ENCODE measurements at regions of chr6 and their contacts with region 1.

Region 1: GRCh38 chr6:33276864-33277662 is at the start of gene B3GALT4:
- DNase-seq: peak; percentile 81 to 89 (median 81)
- ATAC-seq: peak; percentile 56 to 78 (median 76)
- H3K4me3 ChIP-seq: peak within 1 kb of the TSS; percentile 47 to 87 (median 72)
- H3K27ac ChIP-seq: peak within 1 kb of the TSS; percentile 73 to 98 (median 92)
- H3K4me1 ChIP-seq: peaks cover 11 to 73% (median 50%) of the 10 kb centered on the region in 12 donors
- H3K27me3 ChIP-seq: no peaks in the 10 kb centered on the region
- CTCF ChIP-seq: peak; percentile 32 to 79 (median 59)
- POLR2A ChIP-seq: peak in 1 of 2 donors; percentile 66
- total RNA-seq, gene B3GALT4: 7.3 to 13.8 (median 9.1) TPM

Region 2: GRCh38 chr6:33183071-33183683 is 93.9 kb before region 1 on chr6:
- intact Hi-C with region 1: no loop called
- DNase-seq: no peak
- ATAC-seq: no peak
- H3K4me3 ChIP-seq: peak overlapping the region in 1 of 12 donors; percentile 7
- H3K27ac ChIP-seq: peak overlapping the region in 1 of 12 donors; percentile 25
- H3K4me1 ChIP-seq: peaks cover 0 to 13% (median 0%) of the 10 kb centered on the region in 12 donors
- H3K27me3 ChIP-seq: no peaks in the 10 kb centered on the region
- CTCF ChIP-seq: no peak
- POLR2A ChIP-seq: no peak

Region 3: GRCh38 chr6:33313709-33314514 is 36.8 kb after region 1 on chr6 and contains the start of gene TAPBP:
- intact Hi-C with region 1: loop called in 1 of 10 experiments (anchors 5 kb)
- DNase-seq: peak; percentile 62 to 77 (median 71)
- ATAC-seq: peak; percentile 7 to 50 (median 16)
- H3K4me3 ChIP-seq: peak within 1 kb of the TSS; percentile 64 to 99 (median 93)
- H3K27ac ChIP-seq: peak within 1 kb of the TSS; percentile 85 to 99 (median 97)
- H3K4me1 ChIP-seq: peaks cover 0 to 72% (median 39%) of the 10 kb centered on the region in 12 donors
- H3K27me3 ChIP-seq: no peaks in the 10 kb centered on the region
- CTCF ChIP-seq: no peak
- POLR2A ChIP-seq: peak in 1 of 2 donors; percentile 34
- total RNA-seq, gene TAPBP: 51.6 to 248 (median 107) TPM

Measured in heart left ventricle (tissue), 16 donors.